PC-9 (cell line): ENCODE measurements at regions of chr1 and their contacts with region 1.

Region 1: GRCh38 chr1:45303582-45304310 is 22.9 kb upstream of the HPDL start:
- DNase-seq: peak; percentile 89 to 96
- H3K4me3 ChIP-seq: peak overlapping the region; percentile 60
- H3K27ac ChIP-seq: peak overlapping the region; percentile 72
- H3K4me1 ChIP-seq: peaks cover 10% of the 10 kb centered on the region
- H3K27me3 ChIP-seq: no peaks in the 10 kb centered on the region
- CTCF ChIP-seq: peak; percentile 69

Region 2: DNA sequence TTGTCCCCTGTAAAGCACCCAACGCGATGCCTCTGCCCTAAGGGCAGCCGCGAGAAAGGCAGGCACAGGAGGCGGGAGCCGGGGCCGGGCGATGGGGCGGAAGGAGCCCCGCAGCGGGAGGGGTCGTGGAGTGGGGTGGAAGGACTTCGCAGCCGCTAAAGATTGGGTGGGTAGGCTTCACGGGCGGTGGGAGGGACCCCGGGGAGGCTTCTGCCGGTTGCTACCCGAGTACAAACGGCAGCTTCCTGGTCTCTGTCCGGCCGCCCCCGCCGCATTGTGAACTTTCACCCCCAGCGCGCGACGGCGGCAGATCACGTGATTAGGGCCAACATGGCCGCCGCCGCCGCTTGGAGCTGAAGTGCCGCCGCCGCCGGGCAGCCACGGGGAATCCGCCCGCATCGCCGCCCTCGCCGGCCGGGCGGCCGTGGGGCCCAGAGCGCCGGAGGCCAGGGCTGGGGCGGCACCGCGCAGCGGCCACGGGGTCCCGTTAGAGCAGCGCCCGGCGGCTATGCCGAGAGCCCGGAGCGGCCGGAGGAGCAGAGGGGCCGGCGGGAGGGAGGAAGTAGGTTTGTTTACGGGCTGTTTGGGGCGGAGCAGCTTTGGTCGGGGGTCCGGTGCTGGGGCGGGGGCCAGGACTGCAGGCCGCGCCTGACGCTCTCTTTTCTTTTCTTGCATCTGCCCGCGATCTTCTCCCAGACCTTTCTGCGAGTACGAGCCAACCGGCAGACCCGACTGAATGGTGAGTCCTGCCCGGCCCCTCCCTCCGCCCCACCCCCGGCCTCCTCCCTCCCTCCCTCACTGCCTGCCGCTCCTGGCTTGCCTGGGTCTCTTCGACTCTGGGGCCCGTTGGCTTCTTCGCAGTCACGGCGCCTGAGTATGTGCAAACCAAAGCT is 671.9 kb before region 1 on chr1:
- CTCF ChIA-PET with region 1: no interaction called
- POLR2A ChIA-PET with region 1: interaction called, 17 read pairs
- intact Hi-C with region 1: no loop called
- DNase-seq: peak; percentile 76 to 90
- H3K4me3 ChIP-seq: peak overlapping the region; percentile 74
- H3K27ac ChIP-seq: peak overlapping the region; percentile 97
- H3K4me1 ChIP-seq: peaks cover 44% of the 10 kb centered on the region
- H3K27me3 ChIP-seq: no peaks in the 10 kb centered on the region
- CTCF ChIP-seq: no peak

Region 3: DNA sequence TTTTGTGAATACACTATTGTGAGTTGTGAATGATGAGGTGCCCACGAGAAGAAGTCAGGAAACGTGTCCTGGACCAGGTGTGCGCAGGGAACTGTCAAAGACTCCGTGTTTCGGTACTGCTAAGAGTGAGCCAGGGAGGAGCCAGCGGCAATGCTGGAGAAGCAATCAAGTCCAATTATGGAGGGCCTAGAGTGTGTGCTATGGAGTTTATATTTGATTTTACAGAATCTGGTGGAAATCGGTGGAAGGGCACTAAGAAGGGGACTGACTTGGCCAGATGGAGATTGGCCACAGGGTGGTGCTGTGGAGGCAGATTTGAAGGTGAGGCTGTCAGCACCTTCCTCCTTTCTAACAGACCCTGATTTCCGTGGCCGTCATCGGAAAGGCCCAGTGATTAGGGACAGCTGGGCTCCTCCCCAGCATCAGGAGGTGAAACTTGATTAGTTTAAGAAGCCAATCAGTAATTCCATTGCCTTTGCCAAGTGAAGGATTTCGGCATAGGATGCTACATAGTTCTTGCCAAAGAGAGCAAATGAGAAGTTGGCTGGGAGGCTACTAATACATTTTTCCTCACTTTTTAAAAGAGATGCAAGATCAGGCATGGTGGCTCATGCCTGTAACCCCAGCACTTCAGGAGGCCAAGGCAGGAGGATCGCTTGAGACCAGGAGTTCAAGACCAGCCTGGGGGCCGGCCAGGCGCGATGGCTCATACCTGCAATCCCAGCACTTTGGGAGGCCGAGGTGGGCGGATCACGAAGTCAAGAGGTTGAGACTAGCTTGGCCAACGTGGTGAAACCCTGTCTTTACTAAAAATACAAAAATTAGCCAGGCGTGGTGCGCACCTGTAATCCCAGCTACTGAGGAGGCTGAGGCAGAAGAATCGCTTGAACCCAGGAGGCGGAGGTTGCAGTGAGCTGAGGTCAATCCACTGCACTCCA is 467.7 kb before region 1 on chr1:
- CTCF ChIA-PET with region 1: interaction called, 7 read pairs
- POLR2A ChIA-PET with region 1: no interaction called
- intact Hi-C with region 1: loop called (anchors 2 kb)
- DNase-seq: peak; percentile 61 to 84
- H3K4me3 ChIP-seq: no peak overlapping the region
- H3K27ac ChIP-seq: no peak overlapping the region
- H3K4me1 ChIP-seq: no peaks in the 10 kb centered on the region
- H3K27me3 ChIP-seq: no peaks in the 10 kb centered on the region
- CTCF ChIP-seq: peak; percentile 85

Region 4: GRCh38 chr1:45018599-45019230 is 285.0 kb before region 1 on chr1:
- CTCF ChIA-PET with region 1: interaction called, 53 read pairs
- POLR2A ChIA-PET with region 1: interaction called, 18 read pairs
- intact Hi-C with region 1: loop called (anchors 1 kb)
- DNase-seq: peak; percentile 46 to 67
- H3K4me3 ChIP-seq: no peak overlapping the region
- H3K27ac ChIP-seq: no peak overlapping the region
- H3K4me1 ChIP-seq: no peaks in the 10 kb centered on the region
- H3K27me3 ChIP-seq: no peaks in the 10 kb centered on the region
- CTCF ChIP-seq: peak; percentile 78

Region 5: DNA sequence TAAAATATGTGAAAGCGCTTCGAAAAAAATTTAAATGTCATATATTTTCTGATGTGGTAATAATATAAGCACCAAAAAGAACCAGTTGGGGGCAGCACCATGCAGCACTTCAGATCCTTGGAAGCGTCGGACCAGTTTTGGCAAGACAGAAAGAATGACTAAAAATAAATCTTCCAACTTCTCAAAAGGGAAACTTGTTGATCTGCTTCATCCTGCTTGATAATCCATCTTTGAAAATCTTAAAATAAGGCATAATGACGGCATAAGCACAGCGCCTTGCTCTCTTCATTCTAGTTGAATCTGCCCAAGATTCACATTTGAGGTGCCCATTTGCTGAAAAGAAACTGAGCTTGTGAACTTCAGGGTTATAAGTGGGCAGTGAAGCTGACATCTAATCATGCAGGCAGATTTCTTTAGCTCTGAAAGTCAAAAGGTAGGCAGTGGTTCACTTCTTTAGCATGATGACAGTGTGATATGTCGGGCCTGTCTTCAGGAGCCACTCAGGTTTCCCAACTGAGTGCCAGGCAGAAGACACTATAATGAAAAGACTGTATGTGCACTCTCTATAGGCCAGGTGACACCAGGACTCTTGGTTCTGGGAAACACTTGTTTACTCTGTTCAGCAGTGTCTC is 56.3 kb after region 1 on chr1:
- CTCF ChIA-PET with region 1: no interaction called
- POLR2A ChIA-PET with region 1: interaction called, 12 read pairs
- intact Hi-C with region 1: loop called (anchors 1 kb)
- DNase-seq: peak; percentile 49 to 64
- H3K4me3 ChIP-seq: no peak overlapping the region
- H3K27ac ChIP-seq: no peak overlapping the region
- H3K4me1 ChIP-seq: peaks cover 21% of the 10 kb centered on the region
- H3K27me3 ChIP-seq: no peaks in the 10 kb centered on the region
- CTCF ChIP-seq: peak; percentile 84

Region 6: DNA sequence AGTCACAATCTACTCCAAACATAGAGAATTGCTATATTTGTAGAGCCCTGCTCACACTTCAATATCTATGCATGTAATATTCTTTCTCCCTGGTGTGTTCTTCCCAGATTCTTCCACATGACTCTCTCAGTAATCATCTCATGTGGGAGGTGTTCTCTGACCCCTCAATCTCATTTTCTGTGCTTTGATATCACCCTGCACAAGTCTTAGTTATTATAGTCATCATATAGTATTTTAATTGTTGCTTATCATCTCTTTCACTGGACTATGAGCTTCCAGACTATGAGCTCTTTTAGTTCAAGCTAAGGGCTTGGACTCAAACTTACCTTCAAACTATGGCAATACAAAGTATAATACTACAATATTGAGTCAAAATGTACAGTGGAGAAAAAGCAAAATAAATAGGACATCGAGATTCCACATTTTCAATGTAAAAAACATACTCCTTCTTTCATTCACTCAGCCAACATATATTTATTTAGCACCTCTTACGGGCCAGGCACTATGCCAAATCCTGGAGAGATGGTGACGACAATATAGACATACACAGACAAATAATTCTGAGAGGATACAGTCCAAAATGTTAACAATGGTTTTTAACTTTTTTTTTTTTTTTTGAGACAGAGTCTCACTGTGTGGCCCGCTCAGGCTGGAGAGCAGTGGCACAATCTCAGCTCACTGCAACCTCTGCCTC is 174.5 kb after region 1 on chr1:
- CTCF ChIA-PET with region 1: no interaction called
- POLR2A ChIA-PET with region 1: no interaction called
- intact Hi-C with region 1: no loop called
- DNase-seq: no peak
- H3K4me3 ChIP-seq: no peak overlapping the region
- H3K27ac ChIP-seq: no peak overlapping the region
- H3K4me1 ChIP-seq: no peaks in the 10 kb centered on the region
- H3K27me3 ChIP-seq: no peaks in the 10 kb centered on the region
- CTCF ChIP-seq: no peak

Region 7: GRCh38 chr1:45583264-45583665 is 279.5 kb after region 1 on chr1:
- CTCF ChIA-PET with region 1: interaction called, 7 read pairs
- POLR2A ChIA-PET with region 1: interaction called, 21 read pairs
- intact Hi-C with region 1: loop called (anchors 1 kb)
- DNase-seq: peak; percentile 92 to 95
- H3K4me3 ChIP-seq: peak overlapping the region; percentile 86
- H3K27ac ChIP-seq: peak overlapping the region; percentile 64
- H3K4me1 ChIP-seq: peaks cover 17% of the 10 kb centered on the region
- H3K27me3 ChIP-seq: no peaks in the 10 kb centered on the region
- CTCF ChIP-seq: no peak